CD8-positive, alpha-beta memory T cell (primary cell): ENCODE measurements at regions of chr17 and their contacts with region 1.

Region 1: DNA sequence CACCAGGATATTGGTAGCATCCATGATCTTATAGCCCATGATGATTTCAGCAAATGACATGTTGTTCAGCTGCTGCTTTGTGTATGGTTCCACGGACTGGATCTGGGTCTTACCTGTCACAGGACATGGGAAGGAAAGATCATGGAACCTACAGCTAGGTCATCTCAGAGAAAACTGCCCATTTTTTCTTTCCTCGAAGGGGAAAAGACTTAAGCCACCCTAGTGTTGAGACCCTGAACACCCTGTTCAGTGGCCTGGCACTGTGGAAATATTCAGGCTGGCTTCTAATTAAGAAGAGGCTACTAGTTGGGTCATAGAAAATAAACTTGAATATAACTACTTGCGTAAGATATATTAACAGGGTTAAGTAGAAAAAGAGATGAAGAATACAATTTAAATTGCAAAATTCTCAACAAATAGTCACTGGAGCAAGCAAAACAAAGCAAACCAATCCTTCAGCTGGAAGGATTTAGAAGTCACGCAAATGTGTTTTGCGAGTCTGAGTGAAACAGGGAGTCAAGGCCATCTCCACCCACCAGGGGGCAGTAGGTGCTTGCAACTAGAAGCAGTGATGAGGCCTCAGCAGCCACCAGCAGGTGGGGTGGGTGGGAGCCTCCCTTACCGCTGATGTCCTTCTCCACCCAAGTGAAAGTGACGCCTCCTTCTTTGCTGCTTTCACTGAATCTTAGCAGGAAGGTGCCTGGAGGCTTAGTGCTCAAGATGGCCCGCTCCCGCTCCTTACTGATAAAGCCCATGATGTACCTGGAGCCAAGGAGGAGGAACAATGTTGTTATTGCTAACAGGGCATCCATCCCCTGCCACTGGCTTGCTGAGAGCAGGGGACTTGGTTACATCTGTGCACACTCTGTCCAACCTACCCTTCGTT is 34.3 kb downstream of the STAT5A start:
- DNase-seq: peak; percentile 87 to 96 (median 92)
- H3K4me3 ChIP-seq: no peak overlapping the region
- H3K4me3 Mint-ChIP-seq: no peak overlapping the region
- H3K27ac ChIP-seq: no peak overlapping the region
- H3K27ac Mint-ChIP-seq: peak overlapping the region; percentile 22 to 96 (median 69)
- H3K4me1 ChIP-seq: peaks cover 26% of the 10 kb centered on the region
- H3K4me1 Mint-ChIP-seq: peaks cover 25 to 31% (median 26%) of the 10 kb centered on the region in 3 donors
- H3K27me3 ChIP-seq: no peaks in the 10 kb centered on the region
- H3K27me3 Mint-ChIP-seq: no peaks in the 10 kb centered on the region

Region 2: DNA sequence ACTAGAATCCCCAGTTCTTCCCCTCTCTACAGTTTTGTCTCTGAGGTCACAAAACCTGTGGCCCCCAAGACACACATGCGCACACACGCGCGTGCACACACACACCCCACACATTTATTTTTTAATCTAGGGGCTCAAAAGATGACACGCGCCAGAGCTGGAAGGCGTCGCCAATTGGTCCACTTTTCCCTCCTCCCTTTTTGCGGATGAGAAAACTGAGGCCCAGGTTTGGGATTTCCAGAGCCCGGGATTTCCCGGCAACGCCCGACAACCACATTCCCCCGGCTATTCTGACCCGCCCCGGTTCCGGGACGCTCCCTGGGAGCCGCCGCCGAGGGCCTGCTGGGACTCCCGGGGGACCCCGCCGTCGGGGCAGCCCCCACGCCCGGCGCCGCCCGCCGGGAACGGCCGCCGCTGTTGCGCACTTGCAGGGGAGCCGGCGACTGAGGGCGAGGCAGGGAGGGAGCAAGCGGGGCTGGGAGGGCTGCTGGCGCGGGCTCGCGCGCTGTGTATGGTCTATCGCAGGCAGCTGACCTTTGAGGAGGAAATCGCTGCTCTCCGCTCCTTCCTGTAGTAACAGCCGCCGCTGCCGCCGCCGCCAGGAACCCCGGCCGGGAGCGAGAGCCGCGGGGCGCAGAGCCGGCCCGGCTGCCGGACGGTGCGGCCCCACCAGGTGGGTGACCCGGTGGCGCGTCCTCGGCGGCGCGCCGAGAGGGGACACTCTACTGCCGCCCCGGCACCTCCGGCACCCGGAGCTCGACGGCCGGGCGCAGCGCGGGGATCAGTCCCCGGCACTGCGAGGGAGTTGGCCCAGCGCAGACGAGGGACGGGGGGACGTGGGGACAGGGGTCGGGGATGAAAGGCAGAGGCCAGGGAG is 34.5 kb before region 1 on chr17 and contains the start of gene STAT5A:
- CTCF ChIA-PET with region 1: no interaction called
- POLR2A ChIA-PET with region 1: no interaction called
- DNase-seq: peak; percentile 72 to 91 (median 83)
- H3K4me3 ChIP-seq: peak within 1 kb of the TSS; percentile 65
- H3K4me3 Mint-ChIP-seq: peak within 1 kb of the TSS; percentile 93 to 97 (median 96)
- H3K27ac ChIP-seq: peak within 1 kb of the TSS; percentile 88
- H3K27ac Mint-ChIP-seq: peak within 1 kb of the TSS; percentile 95 to 99 (median 99)
- H3K4me1 ChIP-seq: peaks cover 30% of the 10 kb centered on the region
- H3K4me1 Mint-ChIP-seq: peaks cover 42 to 67% (median 52%) of the 10 kb centered on the region in 3 donors
- H3K27me3 ChIP-seq: no peaks in the 10 kb centered on the region
- H3K27me3 Mint-ChIP-seq: no peaks in the 10 kb centered on the region
- total RNA-seq, gene STAT5A: 259 to 263 TPM

Region 3: DNA sequence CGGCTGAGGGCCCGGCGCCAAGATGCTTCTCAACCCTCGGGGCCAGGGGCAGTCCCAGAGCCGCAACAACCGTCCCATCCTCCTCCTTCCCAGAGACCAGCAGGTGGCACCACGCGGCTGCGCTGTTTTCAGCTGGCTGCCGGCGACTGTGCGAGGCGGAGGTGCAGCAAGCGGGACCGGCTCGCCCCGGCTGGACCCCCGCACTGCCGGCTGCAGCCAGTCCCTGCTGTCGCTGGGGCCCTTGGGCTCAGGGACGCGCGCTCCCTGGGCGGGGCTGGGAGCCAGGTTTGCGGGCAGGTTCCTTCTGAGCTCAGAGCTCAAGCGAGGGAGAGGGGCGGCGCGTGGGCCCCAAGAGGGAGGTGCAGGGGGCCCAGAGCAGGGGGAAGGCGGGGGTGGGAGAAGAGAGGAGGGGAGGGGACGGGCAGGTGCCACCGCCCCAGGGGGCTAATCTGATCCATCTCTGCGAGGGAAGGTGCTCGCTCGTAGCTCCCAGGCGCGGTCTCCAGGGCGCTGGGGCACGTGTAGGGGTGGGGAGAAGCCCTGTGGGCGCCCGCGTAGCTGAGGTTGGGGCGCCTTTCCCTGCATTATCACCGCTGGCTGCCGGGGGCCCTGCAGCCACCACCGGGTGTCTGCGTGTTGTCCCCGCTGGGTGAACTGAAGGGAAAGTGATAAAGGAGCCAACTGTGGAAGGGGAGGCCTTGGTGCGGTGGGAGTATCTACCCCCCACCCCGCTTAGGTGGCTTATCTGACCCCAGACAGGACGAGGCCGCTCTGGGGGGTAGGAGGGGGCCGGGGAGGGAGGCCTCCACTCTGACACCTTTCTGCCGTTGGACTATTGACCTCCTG is 10.1 kb before region 1 on chr17:
- CTCF ChIA-PET with region 1: interaction called, 29 read pairs
- POLR2A ChIA-PET with region 1: no interaction called
- DNase-seq: peak; percentile 53 to 80 (median 62)
- H3K4me3 ChIP-seq: no peak overlapping the region
- H3K4me3 Mint-ChIP-seq: peak overlapping the region; percentile 45 to 79 (median 67)
- H3K27ac ChIP-seq: peak overlapping the region; percentile 45
- H3K27ac Mint-ChIP-seq: peak overlapping the region in 7 of 8 donors; percentile 55 to 92 (median 83)
- H3K4me1 ChIP-seq: peaks cover 56% of the 10 kb centered on the region
- H3K4me1 Mint-ChIP-seq: peaks cover 49 to 57% (median 53%) of the 10 kb centered on the region in 3 donors
- H3K27me3 ChIP-seq: no peaks in the 10 kb centered on the region
- H3K27me3 Mint-ChIP-seq: no peaks in the 10 kb centered on the region

Region 4: DNA sequence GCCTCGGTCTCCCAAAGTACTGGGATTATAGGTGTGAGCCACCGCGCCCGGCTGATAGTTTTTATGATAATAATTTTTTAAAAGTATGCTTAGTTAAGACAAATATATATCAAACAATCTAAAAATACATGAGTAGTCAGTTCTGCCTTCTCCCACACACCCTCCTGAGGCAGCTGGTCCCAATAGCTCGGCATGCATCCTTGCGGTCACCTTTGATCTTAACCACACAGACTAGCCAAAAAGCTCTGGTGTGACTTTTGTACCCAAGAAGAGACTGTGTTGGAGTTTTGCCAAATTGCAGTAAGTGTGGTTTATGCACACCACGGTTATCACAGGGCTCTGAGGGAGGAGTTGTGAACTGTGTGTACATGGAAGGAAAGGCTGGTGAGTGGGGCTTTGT is 161.7 kb after region 1 on chr17:
- CTCF ChIA-PET with region 1: no interaction called
- POLR2A ChIA-PET with region 1: no interaction called
- DNase-seq: peak; percentile 57 to 93 (median 77)
- H3K4me3 ChIP-seq: no peak overlapping the region
- H3K4me3 Mint-ChIP-seq: peak overlapping the region; percentile 64 to 82 (median 77)
- H3K27ac ChIP-seq: no peak overlapping the region
- H3K27ac Mint-ChIP-seq: peak overlapping the region; percentile 1 to 84 (median 68)
- H3K4me1 ChIP-seq: peaks cover 19% of the 10 kb centered on the region
- H3K4me1 Mint-ChIP-seq: peaks cover 31 to 48% (median 38%) of the 10 kb centered on the region in 3 donors
- H3K27me3 ChIP-seq: no peaks in the 10 kb centered on the region
- H3K27me3 Mint-ChIP-seq: peaks cover 1 to 5% of the 10 kb centered on the region in 2 donors

Region 5: DNA sequence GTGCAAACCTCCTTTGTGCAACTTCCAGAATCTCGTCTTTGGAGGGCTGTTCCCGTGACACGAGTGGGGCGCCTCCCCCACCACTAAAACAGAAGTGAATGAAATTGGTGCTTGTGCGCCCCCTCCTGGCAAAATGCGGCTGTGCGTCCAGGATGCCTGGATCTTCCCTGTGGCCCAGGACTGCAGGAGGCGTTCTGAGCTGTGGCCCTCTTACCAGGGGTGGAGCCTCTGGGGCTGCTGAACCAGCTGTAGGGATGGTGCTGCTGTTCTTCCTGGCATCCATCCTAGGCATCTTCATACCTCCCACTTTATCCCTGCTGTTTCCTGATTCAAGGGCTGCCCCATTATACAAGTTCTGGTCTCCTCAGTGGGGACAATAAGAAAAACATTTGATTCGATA is 194.9 kb after region 1 on chr17:
- CTCF ChIA-PET with region 1: interaction called, 21 read pairs
- POLR2A ChIA-PET with region 1: no interaction called
- DNase-seq: peak; percentile 69 to 85 (median 76)
- H3K4me3 ChIP-seq: no peak overlapping the region
- H3K4me3 Mint-ChIP-seq: no peak overlapping the region
- H3K27ac ChIP-seq: no peak overlapping the region
- H3K27ac Mint-ChIP-seq: peak overlapping the region in 2 of 8 donors; percentile 24 to 44
- H3K4me1 ChIP-seq: peaks cover 4% of the 10 kb centered on the region
- H3K4me1 Mint-ChIP-seq: peaks cover 2 to 7% (median 7%) of the 10 kb centered on the region in 3 donors
- H3K27me3 ChIP-seq: no peaks in the 10 kb centered on the region
- H3K27me3 Mint-ChIP-seq: peaks cover 0 to 2% of the 10 kb centered on the region in 2 donors

Region 6: GRCh38 chr17:42536048-42536371 is 213.4 kb after region 1 on chr17 and contains the start of gene NAGLU:
- CTCF ChIA-PET with region 1: no interaction called
- POLR2A ChIA-PET with region 1: no interaction called
- DNase-seq: peak; percentile 66 to 87 (median 78)
- H3K4me3 ChIP-seq: peak within 1 kb of the TSS; percentile 70
- H3K4me3 Mint-ChIP-seq: peak within 1 kb of the TSS; percentile 76 to 89 (median 84)
- H3K27ac ChIP-seq: peak within 1 kb of the TSS; percentile 55
- H3K27ac Mint-ChIP-seq: peak within 1 kb of the TSS; percentile 32 to 89 (median 54)
- H3K4me1 ChIP-seq: peaks cover 31% of the 10 kb centered on the region
- H3K4me1 Mint-ChIP-seq: peaks cover 35 to 53% (median 39%) of the 10 kb centered on the region in 3 donors
- H3K27me3 ChIP-seq: no peaks in the 10 kb centered on the region
- H3K27me3 Mint-ChIP-seq: no peaks in the 10 kb centered on the region
- total RNA-seq, gene NAGLU: 15.8 to 17.4 TPM